ENCODE measurements at regions of chr1 and their contacts with region 1.

Region 1: DNA sequence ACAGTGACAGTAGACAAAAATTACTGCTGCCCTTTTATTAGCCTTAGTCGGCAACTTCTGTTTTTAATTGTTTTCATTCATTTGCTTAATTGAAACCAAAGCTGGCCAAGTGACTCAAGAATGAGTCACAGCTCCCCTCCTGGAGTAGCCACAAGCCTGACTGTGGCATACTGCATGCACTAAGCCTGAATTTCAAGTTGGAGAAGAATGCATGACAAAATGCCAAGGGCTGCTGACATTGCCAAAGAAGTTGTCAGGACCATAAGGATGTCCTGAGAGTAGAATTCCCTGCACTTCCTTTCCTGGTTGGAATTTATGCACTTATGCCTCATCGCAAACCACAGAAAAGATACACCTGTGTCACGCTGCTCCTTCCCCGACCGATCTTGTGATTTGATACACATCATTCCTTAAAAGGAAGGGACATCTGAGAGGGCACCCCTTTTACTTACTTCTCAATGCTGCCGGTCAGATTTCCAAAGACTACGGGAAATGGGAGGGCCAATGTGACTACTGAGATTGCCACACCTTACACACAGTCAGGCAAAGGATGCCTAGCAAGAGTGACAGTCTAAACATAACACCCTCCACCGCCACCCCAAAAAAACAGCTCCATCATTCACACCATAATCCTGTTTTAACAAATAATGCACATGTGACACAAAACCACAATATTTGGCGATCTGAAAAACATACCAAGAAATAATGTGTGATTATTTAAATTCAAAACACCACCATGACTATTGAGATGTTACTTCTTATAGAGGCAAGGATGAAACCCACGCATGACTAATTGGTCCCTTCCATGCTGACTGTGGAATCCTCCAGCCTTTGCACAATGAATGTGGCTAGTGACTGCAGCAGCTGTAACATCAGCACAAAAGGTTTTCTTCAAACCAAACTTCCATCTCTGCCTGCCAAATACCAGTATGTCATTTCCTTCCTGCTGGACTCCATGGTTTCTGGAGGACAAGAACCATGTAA is 28.2 kb downstream of the VAV3 start:
- DNase-seq: peak; percentile 99
- ATAC-seq: peak; percentile 94
- H3K4me3 ChIP-seq: peak overlapping the region; percentile 2; the same call in 1 of the 2 replicates
- H3K27ac ChIP-seq: peak overlapping the region; percentile 65
- H3K4me1 ChIP-seq: peaks cover 28% of the 10 kb centered on the region
- H3K27me3 ChIP-seq: no peaks in the 10 kb centered on the region
- CTCF ChIP-seq: no peak

Region 2: GRCh38 chr1:107782217-107782845 is 154.5 kb before region 1 on chr1:
- CTCF ChIA-PET with region 1: no interaction called
- POLR2A ChIA-PET with region 1: no interaction called
- intact Hi-C with region 1: loop called (anchors 1 kb)
- DNase-seq: peak; percentile 76
- ATAC-seq: peak; percentile 86
- H3K4me3 ChIP-seq: no peak overlapping the region
- H3K27ac ChIP-seq: no peak overlapping the region
- H3K4me1 ChIP-seq: peaks cover 7% of the 10 kb centered on the region
- H3K27me3 ChIP-seq: no peaks in the 10 kb centered on the region
- CTCF ChIP-seq: peak; percentile 88

Region 3: DNA sequence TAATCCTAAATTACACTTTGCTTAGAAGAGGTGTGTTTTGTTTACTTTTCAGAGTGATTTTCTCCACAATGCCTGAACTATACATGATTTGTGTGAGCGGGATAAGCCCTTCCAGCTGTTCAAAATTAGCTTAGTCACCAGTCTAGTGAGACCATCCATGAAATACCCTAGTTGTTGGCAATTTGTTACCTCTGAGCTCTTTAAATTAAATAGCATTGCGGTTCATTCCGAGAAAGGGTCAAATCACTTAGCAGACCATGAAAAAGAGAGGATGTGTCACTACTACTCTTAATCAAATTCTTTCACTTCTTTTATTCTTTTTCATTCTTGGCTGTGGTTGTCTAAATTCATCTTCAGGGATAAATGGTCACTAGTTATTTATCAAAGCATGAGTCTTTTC is 40.0 kb after region 1 on chr1:
- CTCF ChIA-PET with region 1: no interaction called
- POLR2A ChIA-PET with region 1: no interaction called
- intact Hi-C with region 1: no loop called
- DNase-seq: no peak
- ATAC-seq: no peak
- H3K4me3 ChIP-seq: no peak overlapping the region
- H3K27ac ChIP-seq: no peak overlapping the region
- H3K4me1 ChIP-seq: no peaks in the 10 kb centered on the region
- H3K27me3 ChIP-seq: no peaks in the 10 kb centered on the region; the same call in 1 of the 2 replicates
- CTCF ChIP-seq: no peak

Region 4: GRCh38 chr1:108057541-108057940 is 120.8 kb after region 1 on chr1:
- CTCF ChIA-PET with region 1: no interaction called
- POLR2A ChIA-PET with region 1: no interaction called
- intact Hi-C with region 1: loop called (anchors 10 kb)
- DNase-seq: no peak
- ATAC-seq: no peak
- H3K4me3 ChIP-seq: no peak overlapping the region
- H3K27ac ChIP-seq: no peak overlapping the region
- H3K4me1 ChIP-seq: peaks cover 7% of the 10 kb centered on the region; the same call in 1 of the 2 replicates
- H3K27me3 ChIP-seq: no peaks in the 10 kb centered on the region
- CTCF ChIP-seq: no peak

Measured in PC-3 (cell line).